ENCODE measurements at regions of chr22 and their contacts with region 1.

Region 1: DNA sequence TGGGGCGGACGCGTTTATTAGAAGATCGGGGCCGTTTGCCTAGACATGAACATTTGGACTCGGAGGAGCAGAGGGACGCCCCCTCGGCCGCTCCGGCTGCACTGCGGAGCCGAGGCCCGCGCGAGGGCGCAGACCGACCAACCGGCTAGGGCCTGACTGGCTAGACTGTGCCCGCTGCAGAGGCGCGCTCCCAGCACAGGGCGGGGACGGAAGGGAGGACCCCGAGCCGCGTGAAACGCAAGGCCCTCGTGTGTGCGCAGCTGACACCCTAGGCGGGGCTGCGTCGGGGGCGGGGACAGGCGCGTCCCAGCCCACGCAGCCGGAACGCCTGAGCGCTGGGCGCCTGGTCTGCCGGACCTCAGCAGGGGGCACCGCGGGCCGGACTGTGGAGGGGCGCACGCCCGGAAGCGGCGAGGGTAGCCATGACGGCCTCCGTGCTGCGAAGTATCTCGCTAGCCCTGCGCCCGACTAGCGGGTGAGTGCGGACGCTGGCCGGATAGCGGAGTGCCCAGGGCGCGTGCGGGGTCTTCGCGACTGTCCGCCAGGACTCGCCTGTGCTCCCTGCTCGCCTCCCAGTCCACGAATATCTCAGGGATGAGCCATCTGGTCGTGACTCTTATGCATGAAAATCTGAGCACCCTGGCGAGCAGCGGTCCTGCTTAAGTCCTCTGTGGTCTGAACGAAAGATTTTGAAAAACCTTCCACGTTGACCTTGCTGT is at the start of gene MRPL40:
- DNase-seq: peak in 1 of 2 experiments; percentile 91
- H3K4me3 ChIP-seq: peak within 1 kb of the TSS; percentile 77 to 89 (median 81)
- H3K27ac ChIP-seq: peak within 1 kb of the TSS; percentile 66; the same call in 1 of the 2 replicates
- H3K4me1 ChIP-seq: peaks cover 0 to 9% (median 4%) of the 10 kb centered on the region in 4 experiments; a peak in 5 of 7 replicates
- H3K27me3 ChIP-seq: no peaks in the 10 kb centered on the region
- CTCF ChIP-seq: no peak
- EP300 ChIP-seq: no peak
- POLR2A ChIP-seq: peak; percentile 80 to 81
- RAD21 ChIP-seq: no peak
- total RNA-seq, gene MRPL40: 14.5 and 18.5 TPM in 2 replicates

Region 2: DNA sequence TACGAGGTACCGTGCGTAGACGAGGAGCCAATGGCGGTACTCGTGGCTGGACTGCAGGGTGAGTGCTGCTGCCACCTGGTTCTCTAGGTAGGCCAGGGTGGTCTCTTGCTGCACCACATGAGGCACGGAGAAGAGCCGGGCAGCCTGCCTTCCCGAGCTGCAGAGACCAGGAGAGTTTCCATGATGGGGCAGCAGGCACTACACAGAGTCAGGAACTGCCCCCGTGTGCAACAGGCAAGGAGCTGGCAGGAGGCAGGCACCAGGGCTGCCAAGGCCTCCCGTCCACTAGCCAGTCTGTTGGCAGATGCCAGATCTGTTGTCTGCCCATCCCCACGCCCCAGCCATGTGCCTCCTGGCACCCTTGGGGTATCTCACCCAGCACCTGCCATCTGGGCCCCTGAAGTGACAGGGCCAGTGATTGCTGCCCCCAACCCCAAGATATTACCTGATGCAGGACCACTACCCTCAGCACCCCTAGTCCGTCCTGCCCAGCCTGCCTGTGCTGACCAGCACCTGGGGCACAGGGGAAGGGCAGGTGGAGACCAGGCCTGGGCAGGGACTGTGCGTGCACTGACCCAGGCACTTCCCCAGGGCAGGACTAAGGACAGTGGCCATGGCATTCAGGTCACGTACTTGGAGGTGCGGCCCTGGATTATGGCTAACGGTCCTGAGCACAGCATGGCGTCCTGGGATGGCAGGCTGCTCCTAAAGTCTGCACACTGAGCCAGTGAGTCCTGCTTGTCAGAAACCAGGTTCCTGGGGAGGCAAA is 78.7 kb before region 1 on chr22:
- CTCF ChIA-PET with region 1: no interaction called
- POLR2A ChIA-PET with region 1: no interaction called
- DNase-seq: no peak
- H3K4me3 ChIP-seq: no peak overlapping the region
- H3K27ac ChIP-seq: no peak overlapping the region
- H3K4me1 ChIP-seq: no peaks in the 10 kb centered on the region
- H3K27me3 ChIP-seq: no peaks in the 10 kb centered on the region
- CTCF ChIP-seq: no peak
- EP300 ChIP-seq: no peak
- POLR2A ChIP-seq: no peak
- RAD21 ChIP-seq: no peak

Region 3: DNA sequence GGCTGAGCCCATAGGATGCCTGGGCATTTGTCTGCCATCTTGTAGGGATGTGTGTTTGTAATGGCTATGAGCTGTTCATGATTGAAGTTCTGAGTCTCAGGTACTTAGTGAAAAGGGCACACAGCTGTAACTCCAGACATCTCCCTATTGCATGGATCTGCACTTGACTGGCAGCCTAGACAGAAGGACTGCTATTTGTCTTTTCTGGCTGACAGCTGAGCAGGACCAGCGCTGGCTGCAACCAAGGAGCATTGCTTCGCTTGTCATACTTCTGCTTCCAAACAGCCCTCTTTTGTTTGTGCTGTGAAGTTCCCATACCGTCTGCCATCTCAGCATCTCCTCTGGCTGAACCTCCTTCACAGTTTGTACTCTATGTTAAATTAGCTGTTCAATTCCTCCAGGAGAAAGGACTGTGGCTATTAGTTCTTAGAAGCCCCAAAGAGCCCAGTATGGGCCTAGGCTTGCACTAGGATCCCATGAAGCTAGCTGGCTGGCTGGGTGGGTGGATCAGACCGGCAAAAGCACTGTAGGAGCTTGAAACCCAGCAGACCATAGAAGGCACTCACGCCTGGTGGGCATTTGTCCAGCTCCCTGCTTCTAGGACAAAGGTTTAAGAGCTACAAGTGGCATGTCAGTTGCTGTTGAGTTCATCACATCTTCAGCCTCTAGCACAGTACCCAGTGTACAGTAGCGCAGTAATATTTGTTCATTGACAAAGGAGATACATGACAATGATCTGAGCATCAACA is 21.2 kb before region 1 on chr22:
- CTCF ChIA-PET with region 1: interaction called, 3 read pairs
- POLR2A ChIA-PET with region 1: interaction called, 24 read pairs
- DNase-seq: no peak
- H3K4me3 ChIP-seq: no peak overlapping the region
- H3K27ac ChIP-seq: no peak overlapping the region
- H3K4me1 ChIP-seq: no peaks in the 10 kb centered on the region; a peak in 1 of 7 replicates
- H3K27me3 ChIP-seq: no peaks in the 10 kb centered on the region
- CTCF ChIP-seq: no peak
- EP300 ChIP-seq: no peak
- POLR2A ChIP-seq: no peak
- RAD21 ChIP-seq: no peak

Region 4: GRCh38 chr22:19419464-19420178 is 12.7 kb before region 1 on chr22:
- CTCF ChIA-PET with region 1: interaction called, 3 read pairs
- POLR2A ChIA-PET with region 1: interaction called, 38 read pairs
- DNase-seq: no peak
- H3K4me3 ChIP-seq: no peak overlapping the region
- H3K27ac ChIP-seq: no peak overlapping the region
- H3K4me1 ChIP-seq: peaks cover 0 to 20% (median 7%) of the 10 kb centered on the region in 4 experiments; a peak in 6 of 7 replicates
- H3K27me3 ChIP-seq: no peaks in the 10 kb centered on the region
- CTCF ChIP-seq: no peak
- EP300 ChIP-seq: no peak
- POLR2A ChIP-seq: no peak
- RAD21 ChIP-seq: no peak

Region 5: DNA sequence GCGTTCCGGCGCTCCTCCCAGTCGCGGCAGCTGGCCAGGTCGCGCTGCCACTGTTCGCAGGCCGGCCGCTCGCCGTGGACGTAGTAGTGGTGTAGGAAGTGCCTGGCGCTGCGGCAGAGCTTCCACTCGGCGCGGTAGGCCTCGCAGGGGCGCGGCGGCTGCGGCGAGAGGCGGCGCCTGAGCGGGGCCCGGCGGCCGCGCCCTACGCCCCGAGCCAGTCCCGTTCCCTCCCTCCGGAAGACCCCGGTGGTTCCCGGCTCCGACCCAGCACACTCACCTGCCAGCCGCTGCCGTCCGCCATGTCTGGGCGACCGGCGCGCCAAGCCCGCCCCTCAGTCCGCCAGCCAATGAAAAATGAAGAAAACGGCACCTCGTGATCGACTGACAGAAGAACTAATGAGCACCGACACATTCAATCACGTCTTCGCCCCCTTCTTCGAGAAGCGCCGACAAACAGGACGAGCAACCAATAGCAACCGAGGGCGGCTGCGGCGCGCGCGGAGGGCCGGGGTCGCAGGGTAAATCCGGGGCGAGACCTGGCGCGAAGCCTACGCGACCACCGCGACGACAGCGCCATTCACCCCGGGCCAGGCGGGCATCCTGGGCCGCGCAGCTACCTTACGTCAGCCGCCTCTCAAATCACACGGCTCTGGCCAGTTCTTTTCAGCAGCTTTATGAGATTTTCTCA is 15.2 kb after region 1 on chr22 and contains the start of gene C22orf39:
- CTCF ChIA-PET with region 1: no interaction called
- POLR2A ChIA-PET with region 1: interaction called, 127 read pairs
- DNase-seq: peak; percentile 79 to 92
- H3K4me3 ChIP-seq: peak within 1 kb of the TSS; percentile 81 to 96 (median 92)
- H3K27ac ChIP-seq: peak within 1 kb of the TSS; percentile 90
- H3K4me1 ChIP-seq: peaks cover 0 to 8% (median 3%) of the 10 kb centered on the region in 4 experiments; a peak in 2 of 7 replicates
- H3K27me3 ChIP-seq: no peaks in the 10 kb centered on the region; a peak in 2 of 7 replicates
- CTCF ChIP-seq: no peak
- EP300 ChIP-seq: no peak
- POLR2A ChIP-seq: peak; percentile 77 to 87
- RAD21 ChIP-seq: no peak
- total RNA-seq, gene C22orf39: 22.7 and 28.2 TPM in 2 replicates

Region 6: GRCh38 chr22:19479357-19480172 is 47.3 kb after region 1 on chr22 and contains the start of gene CDC45:
- CTCF ChIA-PET with region 1: no interaction called
- POLR2A ChIA-PET with region 1: interaction called, 33 read pairs
- DNase-seq: peak; percentile 88
- H3K4me3 ChIP-seq: peak within 1 kb of the TSS; percentile 87 to 99 (median 94)
- H3K27ac ChIP-seq: peak within 1 kb of the TSS; percentile 100
- H3K4me1 ChIP-seq: peaks cover 0 to 8% (median 1%) of the 10 kb centered on the region in 4 experiments; a peak in 2 of 7 replicates
- H3K27me3 ChIP-seq: no peaks in the 10 kb centered on the region
- CTCF ChIP-seq: no peak
- EP300 ChIP-seq: no peak
- POLR2A ChIP-seq: peak; percentile 73 to 86
- RAD21 ChIP-seq: no peak
- total RNA-seq, gene CDC45: 31.9 and 32.6 TPM in 2 replicates